Right ventricle myocardium inferior (tissue), 1 donor: ENCODE measurements at regions of chr10 and their contacts with region 1.

Region 1: GRCh38 chr10:8053446-8054290 is 820 bp upstream of the GATA3 start:
- DNase-seq: peak; percentile 87
- ATAC-seq: peak; percentile 77

Region 2: GRCh38 chr10:8279598-8279997 is 225.9 kb after region 1 on chr10:
- intact Hi-C with region 1: loop called (anchors 10 kb)
- DNase-seq: no peak
- ATAC-seq: no peak

Region 3: DNA sequence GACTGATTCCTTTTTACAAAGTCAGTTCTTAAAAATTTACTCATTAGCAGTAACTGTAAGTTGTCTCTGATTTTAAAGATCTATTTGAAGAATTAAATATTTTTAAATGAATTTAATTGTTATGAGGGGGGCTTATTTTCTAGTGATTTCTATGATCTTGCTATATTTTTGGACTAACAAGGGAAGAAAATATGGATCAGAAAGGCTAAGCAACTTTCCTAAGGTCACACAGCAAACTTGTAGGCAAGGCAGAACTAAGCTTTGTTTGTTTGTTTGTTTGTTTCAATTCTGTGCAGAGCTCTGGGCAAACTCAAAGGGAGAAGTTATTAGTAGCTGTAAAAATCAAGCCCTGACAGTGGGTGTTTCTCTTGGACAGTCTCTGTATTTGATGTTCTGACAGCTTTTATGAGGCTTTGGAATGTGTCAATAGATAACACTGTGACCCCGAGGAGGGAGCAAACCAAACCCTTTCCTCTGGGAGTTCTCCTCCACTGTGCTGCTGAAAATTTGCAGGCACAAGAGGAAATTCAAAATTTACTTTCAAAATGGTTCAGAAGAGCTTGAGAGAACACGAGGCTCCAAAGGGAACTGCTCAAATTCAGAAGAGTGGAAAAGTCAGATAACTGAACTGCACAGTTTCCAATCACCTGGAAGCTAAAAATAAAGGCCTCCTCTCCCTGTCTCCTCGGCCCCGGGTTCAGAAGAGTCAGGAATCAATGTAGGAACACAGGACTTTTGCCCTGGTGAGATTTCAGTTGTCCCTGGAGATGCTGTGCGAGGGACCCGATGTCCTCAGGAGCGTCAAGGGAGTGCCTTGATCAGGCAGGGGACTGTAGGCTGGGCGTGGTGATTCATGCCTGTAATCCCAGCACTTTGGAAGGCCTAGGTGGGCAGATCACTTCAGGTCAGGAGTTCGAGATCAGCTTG is 326.5 kb after region 1 on chr10:
- intact Hi-C with region 1: loop called (anchors 5 kb)
- DNase-seq: no peak
- ATAC-seq: no peak

Region 4: DNA sequence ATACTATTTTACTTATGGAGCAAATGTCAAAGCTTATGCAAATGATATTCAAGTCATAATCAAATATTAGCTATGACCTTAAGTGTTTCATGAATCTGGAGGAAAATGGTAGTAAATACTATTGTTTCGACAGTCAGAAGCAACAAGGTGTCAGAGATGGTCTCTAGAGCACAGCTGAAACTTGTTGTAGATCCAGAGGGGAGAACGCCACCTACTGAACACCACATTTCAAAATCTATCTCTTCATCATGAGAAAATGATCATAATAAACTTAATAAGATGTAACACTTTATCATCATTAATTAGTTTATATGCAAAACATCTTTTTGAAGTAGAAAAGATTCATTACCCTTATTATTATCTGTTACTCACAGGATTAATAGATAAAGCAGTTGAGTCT is 419.5 kb after region 1 on chr10:
- intact Hi-C with region 1: loop called (anchors 10 kb)
- DNase-seq: no peak
- ATAC-seq: no peak